ENCODE measurements at regions of chr14 and their contacts with region 1.

Region 1: GRCh38 chr14:20662968-20663732 is 21.2 kb upstream of the RNASE4 start:
- DNase-seq: peak; percentile 82 to 91 (median 90)
- H3K4me3 ChIP-seq: peak overlapping the region; percentile 30 to 81 (median 69)
- H3K27ac ChIP-seq: no peak overlapping the region
- H3K4me1 ChIP-seq: peaks cover 0 to 18% (median 13%) of the 10 kb centered on the region in 4 experiments
- H3K27me3 ChIP-seq: peaks cover 0 to 22% (median 11%) of the 10 kb centered on the region in 5 experiments

Region 2: GRCh38 chr14:20682435-20683124 is 19.4 kb after region 1 on chr14:
- CTCF ChIA-PET with region 1: interaction called, 179 read pairs
- POLR2A ChIA-PET with region 1: interaction called, 3 read pairs
- DNase-seq: peak; percentile 82 to 86 (median 82)
- H3K4me3 ChIP-seq: peak overlapping the region; percentile 72 to 99 (median 89)
- H3K27ac ChIP-seq: peak overlapping the region; percentile 27 to 84
- H3K4me1 ChIP-seq: peaks cover 24 to 50% (median 41%) of the 10 kb centered on the region in 4 experiments
- H3K27me3 ChIP-seq: no peaks in the 10 kb centered on the region

Region 3: GRCh38 chr14:20818861-20819260 is 155.7 kb after region 1 on chr14:
- CTCF ChIA-PET with region 1: no interaction called
- POLR2A ChIA-PET with region 1: no interaction called
- DNase-seq: no peak
- H3K4me3 ChIP-seq: no peak overlapping the region
- H3K27ac ChIP-seq: no peak overlapping the region
- H3K4me1 ChIP-seq: peaks cover 0 to 10% (median 3%) of the 10 kb centered on the region in 4 experiments
- H3K27me3 ChIP-seq: no peaks in the 10 kb centered on the region